ENCODE measurements at regions of chr11 and their contacts with region 1.

Region 1: DNA sequence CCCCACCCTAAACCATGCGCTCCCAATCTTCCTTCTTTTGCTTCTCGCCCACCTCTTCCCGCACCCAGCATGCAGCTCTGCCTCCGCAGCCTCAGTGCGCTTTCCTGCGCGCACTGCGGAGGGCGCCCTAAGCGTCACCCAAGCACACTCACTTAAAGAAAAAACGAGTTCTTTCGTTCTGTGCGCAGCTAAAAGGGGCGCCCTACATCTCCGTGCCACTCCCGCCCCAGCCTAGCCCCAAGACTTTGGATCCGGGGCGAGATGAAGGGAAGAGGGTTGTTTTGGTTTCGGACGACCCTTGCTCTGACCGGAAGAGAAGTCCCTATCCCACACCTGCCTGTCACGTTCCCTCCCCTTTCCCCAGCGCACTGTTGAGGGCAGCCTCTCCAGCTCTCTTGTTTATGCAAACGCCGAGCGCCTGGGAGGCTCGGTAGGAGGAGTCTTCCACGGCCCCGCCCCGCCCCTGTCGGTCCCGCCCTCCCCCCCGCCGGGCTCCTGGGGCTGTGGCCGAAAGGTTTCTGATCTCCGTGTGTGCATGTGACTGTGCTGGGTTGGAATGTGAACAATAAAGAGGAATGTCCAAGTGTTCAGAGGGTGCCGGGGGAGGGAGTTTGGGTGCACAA is 5.3 kb downstream of the VSIG2 start:
- DNase-seq: peak; percentile 80 to 86 (median 85)
- H3K4me3 ChIP-seq: peak overlapping the region; percentile 76 to 97
- H3K4me3 Mint-ChIP-seq: peak overlapping the region; percentile 96 to 99 (median 98)
- H3K27ac ChIP-seq: peak overlapping the region; percentile 58
- H3K27ac Mint-ChIP-seq: peak overlapping the region; percentile 83 to 98 (median 94)
- H3K4me1 ChIP-seq: peaks cover 6% of the 10 kb centered on the region
- H3K4me1 Mint-ChIP-seq: peaks cover 6 to 21% (median 9%) of the 10 kb centered on the region in 4 donors
- H3K27me3 ChIP-seq: no peaks in the 10 kb centered on the region
- H3K27me3 Mint-ChIP-seq: peaks cover 0 to 1% of the 10 kb centered on the region in 2 donors

Region 2: GRCh38 chr11:124622531-124623451 is 123.9 kb before region 1 on chr11 and contains the start of gene TBRG1:
- CTCF ChIA-PET with region 1: no interaction called
- POLR2A ChIA-PET with region 1: interaction called, 18 read pairs
- intact Hi-C with region 1: no loop called
- DNase-seq: peak; percentile 76 to 88 (median 82)
- H3K4me3 ChIP-seq: peak within 1 kb of the TSS; percentile 63 to 86
- H3K4me3 Mint-ChIP-seq: peak within 1 kb of the TSS; percentile 93 to 100 (median 98)
- H3K27ac ChIP-seq: peak within 1 kb of the TSS; percentile 95
- H3K27ac Mint-ChIP-seq: peak within 1 kb of the TSS; percentile 92 to 100 (median 99)
- H3K4me1 ChIP-seq: peaks cover 34% of the 10 kb centered on the region
- H3K4me1 Mint-ChIP-seq: peaks cover 23 to 53% (median 38%) of the 10 kb centered on the region in 4 donors
- H3K27me3 ChIP-seq: no peaks in the 10 kb centered on the region
- H3K27me3 Mint-ChIP-seq: peaks cover 1 to 6% of the 10 kb centered on the region in 2 donors
- total RNA-seq, gene TBRG1: 69.3 to 75.8 TPM

Region 3: DNA sequence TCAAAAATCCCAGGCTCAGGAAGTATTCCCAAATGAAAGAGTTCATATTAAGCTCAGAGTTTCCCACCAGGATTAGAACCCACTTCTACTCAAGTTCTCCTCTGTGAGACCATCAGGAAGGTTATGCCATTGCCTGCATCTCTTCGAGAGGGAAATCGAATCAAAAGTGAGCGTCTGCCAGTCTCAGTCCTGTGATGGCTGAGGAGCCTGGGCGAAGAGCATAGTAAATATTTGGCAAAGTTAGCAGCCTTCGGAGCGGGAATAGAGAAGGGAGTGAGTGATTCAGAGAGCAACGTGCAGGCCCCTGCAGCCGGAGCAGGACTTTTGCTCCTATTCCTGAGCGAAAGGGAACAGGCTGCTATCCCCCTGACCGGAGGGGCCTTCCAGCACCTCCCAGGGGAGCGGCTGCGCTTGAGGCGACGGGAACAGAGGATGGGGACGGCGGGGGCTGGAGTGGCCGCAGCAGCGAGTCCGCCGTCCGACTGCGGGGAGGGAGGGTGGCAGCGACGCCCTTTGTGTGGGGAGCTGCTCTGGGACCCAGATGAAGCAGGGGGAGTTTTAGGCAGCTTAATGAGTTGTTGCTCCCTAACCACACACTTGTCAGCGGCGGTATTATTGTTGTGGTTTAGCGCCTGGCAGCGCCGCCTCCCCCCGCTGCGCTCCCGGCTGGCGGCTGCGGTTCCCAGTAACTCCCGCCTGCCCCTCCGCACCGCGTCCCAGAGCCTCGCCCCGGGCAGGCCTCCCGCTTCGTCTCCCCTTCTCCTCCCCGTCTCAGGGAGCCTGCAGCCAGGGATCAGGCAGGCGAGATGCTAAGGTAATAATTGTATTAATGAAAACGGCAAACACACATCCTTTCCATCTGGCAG is 28.7 kb before region 1 on chr11:
- CTCF ChIA-PET with region 1: no interaction called
- POLR2A ChIA-PET with region 1: no interaction called
- intact Hi-C with region 1: loop called (anchors 2 kb)
- DNase-seq: peak; percentile 17 to 47 (median 26)
- H3K4me3 ChIP-seq: peak overlapping the region in 1 of 2 donors; percentile 20
- H3K4me3 Mint-ChIP-seq: peak overlapping the region; percentile 49 to 90 (median 78)
- H3K27ac ChIP-seq: no peak overlapping the region
- H3K27ac Mint-ChIP-seq: peak overlapping the region in 2 of 7 donors; percentile 33 to 43
- H3K4me1 ChIP-seq: peaks cover 13% of the 10 kb centered on the region
- H3K4me1 Mint-ChIP-seq: peaks cover 14 to 20% (median 18%) of the 10 kb centered on the region in 4 donors
- H3K27me3 ChIP-seq: peaks cover 7% of the 10 kb centered on the region
- H3K27me3 Mint-ChIP-seq: peaks cover 23 to 31% of the 10 kb centered on the region in 2 donors

Region 4: GRCh38 chr11:124793466-124794278 is 46.9 kb after region 1 on chr11:
- CTCF ChIA-PET with region 1: interaction called, 20 read pairs
- POLR2A ChIA-PET with region 1: interaction called, 45 read pairs
- intact Hi-C with region 1: no loop called
- DNase-seq: peak in 4 of 5 donors; percentile 30 to 46 (median 36)
- H3K4me3 ChIP-seq: no peak overlapping the region
- H3K4me3 Mint-ChIP-seq: no peak overlapping the region
- H3K27ac ChIP-seq: no peak overlapping the region
- H3K27ac Mint-ChIP-seq: no peak overlapping the region
- H3K4me1 ChIP-seq: peaks cover 12% of the 10 kb centered on the region
- H3K4me1 Mint-ChIP-seq: peaks cover 15 to 47% (median 26%) of the 10 kb centered on the region in 4 donors
- H3K27me3 ChIP-seq: no peaks in the 10 kb centered on the region
- H3K27me3 Mint-ChIP-seq: no peaks in the 10 kb centered on the region

Region 5: DNA sequence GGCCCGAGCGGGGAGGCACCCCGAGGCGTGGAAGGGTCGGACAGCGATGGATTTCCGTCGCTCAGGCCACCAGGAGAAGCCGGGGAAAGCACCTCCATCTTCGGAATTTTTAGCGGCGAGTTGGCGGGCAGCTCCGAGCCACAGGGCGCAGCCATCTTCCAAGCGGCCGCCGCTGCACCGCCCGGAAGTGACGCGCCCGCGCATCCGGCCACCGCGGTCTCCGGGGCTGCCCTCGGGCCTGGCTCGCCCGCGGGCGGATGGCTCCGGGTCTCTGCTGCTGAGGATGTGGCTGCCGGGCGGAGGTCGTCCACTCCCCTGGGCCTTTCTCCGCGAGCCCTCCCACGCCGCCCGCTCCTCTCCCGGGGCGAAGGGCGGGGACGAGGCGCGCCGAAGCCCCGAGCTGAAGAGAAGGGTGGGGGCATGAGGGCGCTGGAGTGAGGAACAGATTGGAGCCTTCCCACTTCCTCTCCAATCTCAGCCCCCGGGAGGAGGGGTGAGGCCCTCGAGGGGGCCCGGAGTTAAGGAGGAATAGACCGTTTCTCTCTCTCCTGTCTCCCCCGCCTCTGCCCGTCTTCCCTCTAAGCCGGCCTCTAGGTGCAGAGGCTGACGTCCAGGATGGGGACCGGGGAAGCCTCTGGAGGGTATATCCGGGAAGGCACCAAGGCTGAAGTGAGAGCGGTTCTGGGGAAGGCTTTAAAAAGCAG is 53.6 kb after region 1 on chr11 and contains the start of gene MSANTD2:
- CTCF ChIA-PET with region 1: interaction called, 20 read pairs
- POLR2A ChIA-PET with region 1: interaction called, 45 read pairs
- intact Hi-C with region 1: loop called (anchors 2 kb)
- DNase-seq: peak; percentile 77 to 84 (median 79)
- H3K4me3 ChIP-seq: peak within 1 kb of the TSS; percentile 66 to 93
- H3K4me3 Mint-ChIP-seq: peak within 1 kb of the TSS; percentile 93 to 98 (median 96)
- H3K27ac ChIP-seq: peak within 1 kb of the TSS; percentile 78
- H3K27ac Mint-ChIP-seq: peak within 1 kb of the TSS; percentile 90 to 98 (median 97)
- H3K4me1 ChIP-seq: peaks cover 28% of the 10 kb centered on the region
- H3K4me1 Mint-ChIP-seq: peaks cover 18 to 40% (median 26%) of the 10 kb centered on the region in 4 donors
- H3K27me3 ChIP-seq: no peaks in the 10 kb centered on the region
- H3K27me3 Mint-ChIP-seq: peaks cover 0 to 2% of the 10 kb centered on the region in 2 donors
- total RNA-seq, gene MSANTD2: 25.9 to 26.3 TPM

Region 6: DNA sequence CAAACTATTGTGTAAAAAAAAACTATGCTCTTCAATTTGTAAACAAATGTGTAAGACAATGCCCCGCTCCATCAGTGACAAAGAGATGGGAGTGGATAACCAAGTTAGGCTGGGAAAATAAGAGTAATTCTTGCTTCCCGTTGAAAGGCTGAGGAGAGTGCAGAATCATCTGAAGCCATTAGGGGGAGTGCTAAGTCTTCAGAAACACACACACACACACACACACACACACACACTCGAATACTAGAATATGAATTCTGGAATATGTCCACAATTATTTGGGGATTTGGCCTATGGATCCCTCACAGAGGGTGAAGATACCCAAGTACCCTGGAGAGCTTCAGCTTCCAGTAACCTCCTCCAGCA is 90.7 kb after region 1 on chr11:
- CTCF ChIA-PET with region 1: interaction called, 16 read pairs
- POLR2A ChIA-PET with region 1: interaction called, 5 read pairs
- intact Hi-C with region 1: loop called (anchors 1 kb)
- DNase-seq: peak in 1 of 5 donors; percentile 10
- H3K4me3 ChIP-seq: no peak overlapping the region
- H3K4me3 Mint-ChIP-seq: peak overlapping the region in 1 of 8 donors; percentile 84
- H3K27ac ChIP-seq: no peak overlapping the region
- H3K27ac Mint-ChIP-seq: peak overlapping the region in 1 of 7 donors; percentile 74
- H3K4me1 ChIP-seq: peaks cover 10% of the 10 kb centered on the region
- H3K4me1 Mint-ChIP-seq: peaks cover 8 to 21% (median 14%) of the 10 kb centered on the region in 4 donors
- H3K27me3 ChIP-seq: peaks cover 41% of the 10 kb centered on the region
- H3K27me3 Mint-ChIP-seq: peaks cover 43 to 70% of the 10 kb centered on the region in 2 donors

Measured in CD4-positive, alpha-beta memory T cell (primary cell).